ENCODE measurements at regions of chr19 and their contacts with region 1.

Region 1: GRCh38 chr19:1672038-1672768 is 19.8 kb upstream of the TCF3 start:
- H3K4me3 ChIP-seq: no peak overlapping the region; the same call in 1 of the 2 replicates
- H3K27ac ChIP-seq: no peak overlapping the region
- H3K4me1 ChIP-seq: no peaks in the 10 kb centered on the region; the same call in 1 of the 2 replicates
- CTCF ChIP-seq: peak; percentile 92

Region 2: GRCh38 chr19:1540365-1540925 is 131.8 kb before region 1 on chr19:
- CTCF ChIA-PET with region 1: interaction called, 27 read pairs
- POLR2A ChIA-PET with region 1: no interaction called
- H3K4me3 ChIP-seq: no peak overlapping the region
- H3K27ac ChIP-seq: no peak overlapping the region
- H3K4me1 ChIP-seq: no peaks in the 10 kb centered on the region
- CTCF ChIP-seq: no peak

Region 3: DNA sequence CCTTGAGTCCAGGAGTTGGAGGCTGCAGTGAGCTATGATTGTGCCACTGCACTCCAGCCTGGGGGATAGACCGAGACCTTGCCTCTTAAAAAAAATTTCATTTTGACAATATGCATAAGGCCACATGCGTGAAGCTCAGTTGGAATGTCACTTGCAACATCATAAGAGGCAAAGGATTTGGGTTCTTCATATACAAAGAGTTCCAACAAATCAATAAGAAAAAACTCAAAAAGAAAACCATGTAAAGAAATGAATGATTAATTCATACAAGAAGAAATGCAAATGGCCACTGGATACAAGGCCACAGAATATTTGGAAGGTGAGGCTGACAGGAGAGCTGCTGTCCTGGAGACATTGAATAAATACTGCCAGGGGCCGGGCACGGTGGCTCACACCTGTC is 10.2 kb before region 1 on chr19:
- CTCF ChIA-PET with region 1: interaction called, 15 read pairs
- POLR2A ChIA-PET with region 1: no interaction called
- H3K4me3 ChIP-seq: no peak overlapping the region
- H3K27ac ChIP-seq: no peak overlapping the region
- H3K4me1 ChIP-seq: no peaks in the 10 kb centered on the region
- CTCF ChIP-seq: no peak

Region 4: GRCh38 chr19:1700002-1700732 is 28.0 kb after region 1 on chr19:
- CTCF ChIA-PET with region 1: no interaction called
- POLR2A ChIA-PET with region 1: no interaction called
- H3K4me3 ChIP-seq: no peak overlapping the region
- H3K27ac ChIP-seq: no peak overlapping the region
- H3K4me1 ChIP-seq: no peaks in the 10 kb centered on the region
- CTCF ChIP-seq: no peak

Region 5: DNA sequence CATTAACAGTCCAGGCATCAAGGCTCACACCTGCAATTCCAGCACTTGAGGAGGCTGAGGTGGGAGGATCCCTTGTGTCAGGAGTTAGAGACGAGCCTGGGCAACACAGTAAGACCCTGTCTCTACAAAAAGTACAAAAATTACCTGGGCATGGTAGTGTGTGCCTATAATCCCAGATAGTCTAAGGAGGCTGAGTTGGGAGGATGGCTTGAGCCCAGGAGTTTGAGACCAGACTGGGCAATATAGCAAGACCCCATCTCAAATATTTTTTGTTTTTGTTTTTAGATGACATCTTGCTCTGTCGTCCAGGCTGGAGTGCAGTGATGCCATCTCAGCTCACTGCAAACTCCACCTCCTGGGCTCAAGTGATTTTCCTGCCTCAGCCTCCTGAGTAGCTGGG is 41.0 kb after region 1 on chr19:
- CTCF ChIA-PET with region 1: no interaction called
- POLR2A ChIA-PET with region 1: no interaction called
- H3K4me3 ChIP-seq: no peak overlapping the region
- H3K27ac ChIP-seq: no peak overlapping the region
- H3K4me1 ChIP-seq: no peaks in the 10 kb centered on the region
- CTCF ChIP-seq: no peak

Region 6: GRCh38 chr19:1767464-1767933 is 95.3 kb after region 1 on chr19:
- CTCF ChIA-PET with region 1: interaction called, 68 read pairs
- POLR2A ChIA-PET with region 1: no interaction called
- H3K4me3 ChIP-seq: no peak overlapping the region
- H3K27ac ChIP-seq: no peak overlapping the region
- H3K4me1 ChIP-seq: no peaks in the 10 kb centered on the region
- CTCF ChIP-seq: peak; percentile 84

Region 7: DNA sequence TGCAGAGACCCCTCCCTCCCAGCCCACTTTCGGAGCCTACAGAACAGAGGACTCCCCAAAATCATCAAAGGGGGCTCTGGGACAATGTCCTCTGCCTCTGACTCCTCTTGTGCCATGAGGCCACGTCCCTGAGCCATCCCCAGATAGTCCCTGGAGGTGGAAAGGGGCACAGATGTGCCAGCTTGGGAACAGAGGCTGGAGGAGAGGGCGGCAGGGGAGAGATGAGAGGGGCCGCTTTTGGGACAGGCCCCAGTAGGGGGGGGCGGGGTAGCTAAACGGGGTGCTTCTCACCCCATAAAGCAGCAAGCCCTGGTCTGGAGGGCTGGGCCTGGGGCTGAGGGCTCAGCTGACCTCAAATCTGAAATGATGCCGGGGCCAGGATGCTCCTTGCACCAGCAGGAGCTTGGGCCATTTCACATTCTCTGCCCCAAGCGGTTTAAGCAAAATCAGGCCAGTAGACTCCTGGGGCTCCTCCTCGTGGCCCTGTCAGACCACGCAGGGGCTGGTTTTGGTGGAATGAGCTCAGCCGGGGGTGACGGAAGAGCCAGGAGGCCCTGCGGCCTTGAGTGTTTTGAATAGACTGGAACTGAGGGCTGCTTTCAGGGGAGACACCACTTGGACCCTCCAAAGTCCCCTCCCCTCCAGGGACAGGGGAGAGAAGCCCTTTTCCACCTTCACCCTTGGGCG is 108.2 kb after region 1 on chr19:
- CTCF ChIA-PET with region 1: interaction called, 10 read pairs
- POLR2A ChIA-PET with region 1: no interaction called
- H3K4me3 ChIP-seq: no peak overlapping the region
- H3K27ac ChIP-seq: no peak overlapping the region
- H3K4me1 ChIP-seq: no peaks in the 10 kb centered on the region
- CTCF ChIP-seq: no peak

Region 8: DNA sequence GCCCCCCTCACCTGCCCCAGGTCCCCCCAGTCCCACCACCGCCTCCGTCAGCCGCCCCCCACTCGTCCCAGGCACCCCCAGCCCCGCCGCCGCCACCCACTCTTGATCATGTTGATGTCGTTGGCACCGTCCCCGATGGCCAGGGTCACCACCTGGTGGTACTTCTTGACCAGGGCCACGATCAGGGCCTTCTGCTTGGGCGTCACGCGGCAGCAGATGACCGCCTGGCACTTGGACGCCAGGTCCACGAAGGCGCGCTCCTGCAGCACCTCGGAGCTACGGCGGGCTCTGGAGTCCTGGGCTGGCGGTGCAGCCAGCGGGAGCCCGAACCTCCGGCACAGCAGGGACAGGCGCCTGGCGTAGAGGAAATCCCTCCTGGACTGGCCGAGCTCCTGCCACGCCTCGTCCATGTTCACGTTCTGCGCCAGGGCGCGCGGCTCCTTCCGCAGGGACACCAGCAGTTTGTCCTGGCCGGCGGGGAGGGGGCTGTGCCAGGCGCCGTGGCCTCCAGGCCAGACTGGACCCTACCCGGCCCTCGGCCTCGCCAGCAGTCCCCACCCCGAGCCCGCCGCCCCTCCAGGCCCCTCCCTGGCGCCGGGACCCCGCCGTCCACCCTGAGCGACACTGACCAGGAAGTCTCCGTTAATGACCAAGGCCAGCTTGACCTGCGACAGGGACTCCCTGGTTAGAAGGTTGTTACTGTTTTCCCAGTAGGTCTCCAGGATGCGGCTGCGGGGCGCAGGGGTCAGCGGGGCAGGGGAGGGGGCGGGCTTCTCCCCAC is 117.2 kb after region 1 on chr19:
- CTCF ChIA-PET with region 1: interaction called, 49 read pairs
- POLR2A ChIA-PET with region 1: interaction called, 4 read pairs
- H3K4me3 ChIP-seq: no peak overlapping the region
- H3K27ac ChIP-seq: no peak overlapping the region
- H3K4me1 ChIP-seq: no peaks in the 10 kb centered on the region
- CTCF ChIP-seq: no peak

Region 9: DNA sequence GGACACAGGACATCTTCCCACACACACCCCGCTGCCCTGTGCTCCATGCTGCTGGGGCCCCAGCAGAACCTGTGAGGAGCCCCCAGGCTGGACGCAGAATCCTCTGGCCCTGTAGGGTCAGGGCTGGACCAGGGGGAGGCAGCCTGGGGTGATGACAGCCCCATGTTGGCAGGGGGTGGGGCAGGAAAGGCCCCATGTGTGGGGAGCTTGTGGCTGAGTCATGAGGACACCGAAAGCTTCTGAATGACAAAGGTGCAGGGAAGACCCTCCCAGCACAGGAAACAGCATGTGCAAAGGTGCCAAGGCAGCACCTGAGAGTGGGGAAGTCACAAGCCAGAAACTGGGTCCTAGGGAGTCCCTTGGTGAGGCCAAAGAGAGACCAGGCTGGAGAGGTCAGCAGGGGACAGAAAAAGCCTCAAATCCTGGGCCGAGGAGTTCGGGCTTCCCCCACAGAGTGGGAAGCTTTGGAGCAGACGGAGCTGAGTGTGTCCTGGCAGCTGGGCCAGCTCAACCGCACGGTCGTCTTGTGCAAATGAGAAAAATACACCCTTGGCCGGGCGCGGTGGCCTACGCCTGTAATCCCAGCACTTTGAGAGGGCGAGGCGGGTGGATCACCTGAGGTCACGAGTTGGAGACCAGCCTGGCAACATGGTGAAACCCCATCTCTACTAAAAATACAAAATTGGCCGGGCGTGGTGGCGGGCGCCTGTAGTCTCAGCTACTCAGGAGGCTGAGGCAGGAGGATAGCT is 122.4 kb after region 1 on chr19:
- CTCF ChIA-PET with region 1: interaction called, 49 read pairs
- POLR2A ChIA-PET with region 1: interaction called, 4 read pairs
- H3K4me3 ChIP-seq: no peak overlapping the region
- H3K27ac ChIP-seq: no peak overlapping the region
- H3K4me1 ChIP-seq: no peaks in the 10 kb centered on the region
- CTCF ChIP-seq: no peak

Region 10: DNA sequence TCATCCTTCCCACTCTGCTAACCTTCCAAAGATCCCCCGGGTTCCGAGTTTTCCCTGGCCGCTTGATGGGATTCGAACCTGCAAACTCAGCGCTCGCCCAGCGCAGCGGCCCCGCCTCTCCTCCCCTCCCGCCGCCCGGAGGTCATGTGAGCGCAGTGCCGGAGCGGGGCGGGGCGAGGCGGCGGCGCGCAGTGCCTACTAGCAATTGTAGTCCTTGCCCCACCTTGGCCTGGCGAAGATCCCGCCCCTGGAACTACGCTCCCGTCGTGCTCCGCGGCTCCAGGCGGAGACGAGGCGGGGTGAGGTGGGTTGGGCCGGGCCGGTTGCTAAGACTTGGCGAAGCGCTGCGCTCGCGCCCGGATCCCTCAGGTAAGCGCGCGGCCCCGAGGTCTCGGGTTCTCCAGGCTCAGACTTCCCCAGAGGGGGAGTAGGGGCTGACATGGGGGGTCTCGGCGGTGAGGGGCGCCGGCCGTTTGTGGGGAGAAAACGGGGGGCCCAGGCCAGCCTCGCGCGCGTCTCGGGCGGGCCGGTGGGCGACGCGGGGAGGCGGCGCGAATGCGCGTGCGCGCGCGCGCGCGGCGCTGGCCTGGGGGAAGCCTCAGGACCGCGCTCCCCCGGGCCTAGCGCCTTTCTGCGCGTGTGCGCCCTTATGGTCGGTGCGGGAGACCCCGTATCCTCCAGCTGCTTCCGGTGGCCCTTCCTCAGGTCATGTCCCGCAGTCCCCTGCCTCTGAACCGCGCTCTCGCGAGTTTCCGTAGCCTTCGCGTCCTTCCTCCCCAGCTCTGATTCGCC is 233.1 kb after region 1 on chr19 and contains the starts of genes ADAT3 and SCAMP4:
- CTCF ChIA-PET with region 1: no interaction called
- POLR2A ChIA-PET with region 1: no interaction called
- H3K4me3 ChIP-seq: peak within 1 kb of the TSS; percentile 81
- H3K27ac ChIP-seq: peak within 1 kb of the TSS; percentile 81
- H3K4me1 ChIP-seq: peaks cover 12% of the 10 kb centered on the region
- CTCF ChIP-seq: no peak